CD14-positive monocyte (primary cell): ENCODE measurements at regions of chr9 and their contacts with region 1.

Region 1: GRCh38 chr9:92115071-92115858 is at the start of gene SPTLC1:
- DNase-seq: peak; percentile 94 to 95 (median 94)
- H3K4me3 ChIP-seq: peak within 1 kb of the TSS; percentile 88 to 92 (median 89)
- H3K4me3 Mint-ChIP-seq: peak within 1 kb of the TSS; percentile 93 to 99
- H3K27ac ChIP-seq: peak within 1 kb of the TSS; percentile 76 to 97
- H3K27ac Mint-ChIP-seq: peak within 1 kb of the TSS; percentile 98 to 100 (median 99)
- H3K4me1 ChIP-seq: peaks cover 33 to 41% of the 10 kb centered on the region in 2 donors
- H3K4me1 Mint-ChIP-seq: peaks cover 22% of the 10 kb centered on the region
- H3K27me3 ChIP-seq: no peaks in the 10 kb centered on the region
- H3K27me3 Mint-ChIP-seq: peaks cover 0 to 1% (median 1%) of the 10 kb centered on the region in 3 donors
- CTCF ChIP-seq: no peak
- polyA plus RNA-seq, gene SPTLC1: 37.4 to 92.4 (median 80.0) TPM

Region 2: GRCh38 chr9:91758491-91758981 is 356.7 kb before region 1 on chr9:
- intact Hi-C with region 1: no loop called
- DNase-seq: no peak
- H3K4me3 ChIP-seq: no peak overlapping the region
- H3K4me3 Mint-ChIP-seq: no peak overlapping the region
- H3K27ac ChIP-seq: no peak overlapping the region
- H3K27ac Mint-ChIP-seq: no peak overlapping the region
- H3K4me1 ChIP-seq: no peaks in the 10 kb centered on the region
- H3K4me1 Mint-ChIP-seq: no peaks in the 10 kb centered on the region
- H3K27me3 ChIP-seq: no peaks in the 10 kb centered on the region
- H3K27me3 Mint-ChIP-seq: peaks cover 0 to 1% (median 0%) of the 10 kb centered on the region in 3 donors
- CTCF ChIP-seq: peak; percentile 41

Region 3: DNA sequence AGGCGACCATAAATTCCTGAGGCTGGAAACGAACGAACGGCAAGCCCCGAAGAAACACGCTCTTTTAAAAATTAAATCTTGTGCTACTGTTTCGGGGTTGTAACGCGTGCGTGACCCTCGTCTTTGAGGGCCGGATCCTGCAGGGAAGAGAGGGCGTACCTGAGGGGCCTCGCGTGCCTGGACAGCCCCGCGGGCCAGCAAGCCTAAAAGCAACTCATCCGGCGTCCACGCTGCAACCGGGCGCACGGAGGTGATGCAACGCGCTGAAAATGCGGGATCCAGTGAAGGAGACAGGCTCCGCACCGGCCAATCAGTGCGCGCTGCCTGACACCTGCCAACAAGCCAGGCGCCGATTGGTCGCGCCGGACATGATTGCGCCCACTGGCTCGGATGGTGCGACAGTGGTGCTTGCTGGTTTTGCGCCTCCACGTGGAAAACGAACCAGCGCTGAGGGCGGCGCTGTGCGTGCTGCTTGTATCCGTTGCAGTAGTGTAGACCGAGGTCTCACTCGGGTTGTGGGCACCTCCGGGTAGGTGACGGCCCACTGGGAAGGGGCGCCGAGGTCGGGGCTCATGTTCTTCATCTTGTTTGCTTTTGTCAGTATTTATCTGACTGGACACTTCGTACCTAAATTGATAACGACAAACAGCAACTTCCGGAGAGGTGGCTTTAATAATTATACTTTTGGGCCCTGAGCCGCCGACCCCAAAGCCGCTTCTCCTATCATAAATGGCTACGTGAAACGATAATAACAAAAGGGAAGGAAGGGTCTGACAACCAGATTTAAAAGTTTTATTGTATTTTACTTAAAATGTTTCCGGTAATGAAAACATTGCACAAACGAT is 178.4 kb after region 1 on chr9 and contains the start of gene IARS1:
- intact Hi-C with region 1: loop called (anchors 10 kb)
- DNase-seq: peak; percentile 98
- H3K4me3 ChIP-seq: peak within 1 kb of the TSS; percentile 79 to 93 (median 84)
- H3K4me3 Mint-ChIP-seq: peak within 1 kb of the TSS; percentile 92 to 97
- H3K27ac ChIP-seq: peak within 1 kb of the TSS; percentile 73 to 89
- H3K27ac Mint-ChIP-seq: peak within 1 kb of the TSS; percentile 82 to 95 (median 91)
- H3K4me1 ChIP-seq: peaks cover 14 to 23% of the 10 kb centered on the region in 2 donors
- H3K4me1 Mint-ChIP-seq: peaks cover 20% of the 10 kb centered on the region
- H3K27me3 ChIP-seq: no peaks in the 10 kb centered on the region
- H3K27me3 Mint-ChIP-seq: no peaks in the 10 kb centered on the region
- CTCF ChIP-seq: peak; percentile 26
- polyA plus RNA-seq, gene IARS1: 7.1 to 24.2 (median 22.8) TPM